Dendritic cell treated with granulocyte-macrophage colony-stimulating factor and Interleukin-4, amounts not matched to agents 40 ng/mL and 50 ng/mL, for 4 days (primary cell): ENCODE measurements at regions of chr10 and their contacts with region 1.

Region 1: GRCh38 chr10:71771821-71772617 is 1.3 kb downstream of the VSIR start:
- H3K4me3 Mint-ChIP-seq: peak overlapping the region; percentile 80
- H3K27ac Mint-ChIP-seq: peak overlapping the region; percentile 76
- H3K4me1 Mint-ChIP-seq: peaks cover 82% of the 10 kb centered on the region
- H3K27me3 Mint-ChIP-seq: no peaks in the 10 kb centered on the region

Region 2: GRCh38 chr10:71713135-71714030 is 58.6 kb before region 1 on chr10:
- intact Hi-C with region 1: loop called (anchors 5 kb)
- H3K4me3 Mint-ChIP-seq: no peak overlapping the region
- H3K27ac Mint-ChIP-seq: peak overlapping the region; percentile 92
- H3K4me1 Mint-ChIP-seq: peaks cover 93% of the 10 kb centered on the region
- H3K27me3 Mint-ChIP-seq: no peaks in the 10 kb centered on the region

Region 3: DNA sequence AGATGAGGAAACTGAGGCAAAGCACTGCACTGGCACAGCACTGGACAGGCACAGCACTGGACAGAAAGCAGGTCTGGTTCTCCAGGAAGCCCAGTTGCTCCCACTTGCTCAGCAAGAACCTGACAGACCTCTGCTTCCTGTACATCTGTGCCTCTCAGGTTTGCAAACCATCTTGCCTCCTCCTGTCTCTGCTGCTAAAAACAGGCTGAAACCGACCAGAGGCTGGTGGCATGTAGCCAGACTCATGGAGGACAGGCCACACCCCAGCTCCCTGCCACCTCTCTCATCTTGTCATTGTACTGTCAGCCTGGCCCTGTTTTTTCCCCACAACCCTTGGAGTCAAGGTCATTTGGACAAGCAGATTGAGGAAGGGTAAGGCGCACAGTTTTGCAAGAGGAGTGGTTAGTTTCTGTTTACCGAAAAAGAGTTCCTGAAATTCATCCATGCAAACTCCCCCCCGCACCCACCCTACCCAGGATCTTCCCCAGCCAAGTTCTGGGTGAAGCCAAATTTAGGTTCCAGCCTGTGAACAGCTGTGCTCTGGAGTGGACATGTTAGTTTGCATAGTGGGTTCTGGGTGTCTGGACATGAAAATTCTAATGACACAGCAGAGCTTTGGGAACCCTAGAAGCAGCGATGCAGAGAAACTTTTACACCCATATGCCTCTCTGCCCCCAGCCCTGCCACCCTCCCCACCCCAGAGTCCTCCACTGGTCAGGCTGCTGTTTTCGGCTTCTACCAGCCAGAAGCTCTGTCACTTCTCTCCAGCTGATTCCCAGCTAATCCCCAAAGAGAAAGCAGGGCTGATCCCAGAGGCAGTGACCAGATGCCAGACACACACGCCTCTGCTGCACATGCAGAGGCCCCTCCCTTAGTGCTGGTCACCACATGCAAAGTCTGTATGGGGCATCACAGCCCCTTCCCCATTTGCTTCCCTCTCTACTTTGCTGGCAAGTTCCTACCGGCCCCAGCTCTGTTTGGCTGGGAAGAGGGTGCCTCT is 44.0 kb before region 1 on chr10:
- intact Hi-C with region 1: loop called (anchors 1 kb)
- H3K4me3 Mint-ChIP-seq: peak overlapping the region; percentile 39
- H3K27ac Mint-ChIP-seq: peak overlapping the region; percentile 97
- H3K4me1 Mint-ChIP-seq: peaks cover 94% of the 10 kb centered on the region
- H3K27me3 Mint-ChIP-seq: no peaks in the 10 kb centered on the region

Region 4: DNA sequence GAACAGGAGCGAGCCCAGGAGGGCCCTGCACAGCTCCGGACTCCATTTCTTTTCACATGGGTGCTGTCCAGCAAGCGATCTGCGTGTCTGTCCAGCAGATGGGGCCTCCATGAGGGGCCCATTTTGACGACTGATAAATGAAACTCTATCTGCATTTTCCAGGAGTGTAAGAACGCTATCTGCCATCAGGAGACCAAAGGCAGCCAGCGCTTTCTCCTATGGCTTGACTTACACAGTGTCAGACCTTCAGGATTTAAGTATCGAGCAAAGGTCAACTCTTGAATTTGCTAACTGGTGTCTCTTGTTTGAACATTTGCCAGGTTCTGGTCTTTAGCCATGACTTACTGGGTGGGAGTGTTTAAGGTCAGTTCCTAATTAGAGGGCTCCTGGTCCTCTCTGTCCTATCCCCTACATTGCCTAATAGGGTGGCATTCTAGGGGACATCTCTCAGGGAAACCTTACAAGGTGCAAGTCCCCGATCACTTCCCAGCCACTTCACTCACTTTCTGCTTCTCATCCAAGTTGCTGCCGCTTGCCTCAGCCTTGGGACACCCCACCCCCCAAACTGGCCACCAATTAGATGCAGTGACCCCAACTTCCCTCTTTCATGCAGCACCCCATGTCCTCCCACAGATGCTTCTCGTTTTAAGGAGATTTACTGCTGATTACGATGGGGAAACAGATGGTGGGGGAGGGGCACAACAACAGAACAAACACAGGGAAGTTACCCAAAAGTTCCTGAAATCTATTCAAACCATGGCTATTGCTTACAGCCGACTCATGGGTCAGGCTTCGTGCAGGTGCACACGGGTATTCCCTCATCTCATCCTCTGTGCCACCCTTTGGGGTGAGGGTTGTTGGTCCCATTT is 18.7 kb before region 1 on chr10:
- intact Hi-C with region 1: loop called (anchors 1 kb)
- H3K4me3 Mint-ChIP-seq: peak overlapping the region; percentile 21
- H3K27ac Mint-ChIP-seq: peak overlapping the region; percentile 88
- H3K4me1 Mint-ChIP-seq: peaks cover 100% of the 10 kb centered on the region
- H3K27me3 Mint-ChIP-seq: no peaks in the 10 kb centered on the region

Region 5: GRCh38 chr10:71812016-71812912 is 40.2 kb after region 1 on chr10:
- intact Hi-C with region 1: loop called (anchors 5 kb)
- H3K4me3 Mint-ChIP-seq: no peak overlapping the region
- H3K27ac Mint-ChIP-seq: no peak overlapping the region
- H3K4me1 Mint-ChIP-seq: peaks cover 47% of the 10 kb centered on the region
- H3K27me3 Mint-ChIP-seq: no peaks in the 10 kb centered on the region

Region 6: DNA sequence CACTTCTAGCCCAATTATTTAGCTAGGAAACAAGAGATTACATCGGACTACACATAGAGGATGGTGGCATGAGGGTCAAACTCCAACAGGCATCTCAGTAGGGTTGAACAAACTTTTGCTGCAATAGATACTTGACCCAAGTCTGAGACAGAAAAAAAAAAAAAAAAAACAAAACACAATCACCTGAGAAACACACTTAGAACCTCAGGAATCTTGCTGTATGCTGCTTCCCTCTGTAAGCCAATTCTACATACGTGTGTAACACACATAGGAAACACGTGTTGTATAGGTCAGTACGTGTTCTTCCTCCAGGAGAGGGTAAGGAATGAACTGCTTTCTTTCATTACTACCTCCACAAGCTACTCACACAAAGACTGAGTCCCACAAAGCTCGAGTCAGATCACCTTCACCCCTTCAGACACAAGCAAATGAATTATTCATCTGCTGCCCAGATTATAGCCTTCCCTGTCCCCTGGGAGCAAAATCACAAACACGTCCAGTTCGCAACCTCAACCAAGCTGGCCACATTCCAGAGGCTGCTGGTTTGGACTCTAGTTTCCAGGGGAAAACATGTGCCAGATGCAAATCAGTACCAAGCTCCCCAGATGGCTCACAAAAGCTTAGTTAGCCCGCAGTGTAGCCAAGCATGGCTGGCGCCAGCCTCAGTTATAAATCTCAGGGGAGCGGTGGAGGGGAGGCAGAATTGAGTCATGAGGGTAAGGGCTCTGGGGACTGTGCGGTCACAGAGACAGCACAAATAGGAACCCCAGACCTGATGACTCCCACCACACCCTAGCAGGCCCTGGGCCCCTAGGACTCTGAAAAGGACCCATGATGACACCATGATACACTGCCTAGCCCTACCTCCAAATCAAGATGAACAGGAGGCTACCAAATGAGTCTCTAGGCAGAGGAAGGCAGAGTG is 63.9 kb after region 1 on chr10:
- intact Hi-C with region 1: no loop called
- H3K4me3 Mint-ChIP-seq: peak overlapping the region; percentile 49
- H3K27ac Mint-ChIP-seq: peak overlapping the region; percentile 76
- H3K4me1 Mint-ChIP-seq: peaks cover 96% of the 10 kb centered on the region
- H3K27me3 Mint-ChIP-seq: no peaks in the 10 kb centered on the region